ENCODE measurements at regions of chr22 and their contacts with region 1.

Region 1: DNA sequence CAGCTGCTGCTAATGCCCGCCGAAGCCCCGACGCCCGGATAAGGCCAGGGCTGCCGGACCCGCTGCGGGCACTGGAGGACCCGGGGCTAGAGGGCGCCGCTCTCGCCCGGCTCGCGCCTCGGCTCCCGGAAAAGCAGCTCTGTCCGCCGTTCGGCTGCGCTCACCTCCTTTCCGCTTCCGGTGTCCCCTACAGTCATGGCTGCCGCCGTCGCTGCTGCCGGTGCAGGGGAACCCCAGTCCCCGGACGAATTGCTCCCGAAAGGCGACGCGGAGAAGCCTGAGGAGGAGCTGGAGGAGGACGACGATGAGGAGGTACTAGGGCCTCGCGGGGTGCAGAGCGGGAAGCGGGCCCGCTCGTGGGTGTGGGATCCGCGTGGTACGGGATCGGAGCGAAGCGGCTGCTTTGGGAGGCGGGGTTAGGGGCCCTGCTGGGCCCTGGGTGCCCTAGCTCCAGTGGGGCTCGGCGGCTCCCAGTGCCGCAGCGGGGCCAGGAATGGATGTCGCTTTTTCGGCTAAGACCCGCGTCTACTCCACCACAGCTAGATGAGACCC is at the start of gene TOMM22:
- DNase-seq: peak; percentile 85 to 87
- ATAC-seq: peak; percentile 99
- H3K4me3 ChIP-seq: peak within 1 kb of the TSS; percentile 87
- H3K27ac ChIP-seq: peak within 1 kb of the TSS; percentile 88 to 92
- H3K4me1 ChIP-seq: no peaks in the 10 kb centered on the region
- CTCF ChIP-seq: peak; percentile 63
- EP300 ChIP-seq: no peak
- POLR2A ChIP-seq: peak; percentile 60
- RAD21 ChIP-seq: peak in 1 of 2 experiments; percentile 36; a peak in 1 of 5 replicates
- polyA plus RNA-seq, gene TOMM22: 53.6 and 63.2 TPM in 2 replicates

Region 2: GRCh38 chr22:38649841-38650522 is 31.9 kb before region 1 on chr22:
- CTCF ChIA-PET with region 1: interaction called, 3 read pairs
- POLR2A ChIA-PET with region 1: interaction called, 10 read pairs
- DNase-seq: no peak
- ATAC-seq: no peak
- H3K4me3 ChIP-seq: no peak overlapping the region
- H3K27ac ChIP-seq: no peak overlapping the region
- H3K4me1 ChIP-seq: no peaks in the 10 kb centered on the region
- CTCF ChIP-seq: no peak
- EP300 ChIP-seq: no peak
- POLR2A ChIP-seq: no peak
- RAD21 ChIP-seq: no peak

Region 3: DNA sequence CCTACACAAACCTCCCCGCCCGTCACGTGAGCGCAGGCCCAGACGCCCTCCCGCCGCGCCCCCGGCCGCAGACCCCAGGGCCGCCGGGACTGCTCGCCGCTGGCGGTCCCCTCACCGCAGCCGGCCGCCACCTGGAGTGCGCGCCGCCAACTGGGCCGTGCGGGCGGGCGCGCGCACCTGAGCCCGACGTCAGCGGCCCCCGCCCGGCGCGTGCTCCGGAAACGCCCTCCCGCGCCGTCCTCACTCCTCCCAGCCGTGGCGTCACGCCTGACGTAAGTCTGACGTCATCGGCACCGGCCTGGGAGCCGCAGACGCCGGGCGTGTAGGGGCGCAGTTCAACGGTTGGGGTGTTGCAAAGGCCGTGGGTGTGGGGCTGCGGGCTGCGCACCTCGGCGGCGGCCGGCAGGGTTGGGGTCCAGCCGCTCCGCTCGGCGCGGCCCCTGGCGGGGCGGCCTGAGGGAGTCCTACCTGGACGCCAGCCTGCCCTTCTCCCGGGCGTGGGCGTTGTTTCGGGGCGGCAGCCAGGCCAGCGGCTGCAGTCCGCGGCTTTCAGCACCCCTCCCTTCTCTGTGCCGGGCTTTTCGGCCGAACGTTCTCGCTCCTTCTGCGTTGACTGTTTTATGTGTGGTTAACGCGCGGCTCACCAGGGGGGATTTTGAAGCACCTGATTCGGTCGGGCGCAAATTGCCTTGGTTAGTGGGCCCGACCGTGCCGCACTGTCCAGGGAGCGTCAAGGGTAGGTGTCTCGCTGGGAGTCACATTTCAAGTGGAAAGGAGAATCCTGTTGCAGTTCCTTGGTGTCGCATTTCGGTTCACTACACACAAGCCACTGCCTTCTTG is 19.1 kb after region 1 on chr22 and contains the start of gene JOSD1:
- CTCF ChIA-PET with region 1: interaction called, 47 read pairs
- POLR2A ChIA-PET with region 1: interaction called, 15 read pairs
- DNase-seq: peak; percentile 64 to 95
- ATAC-seq: peak; percentile 12 to 60
- H3K4me3 ChIP-seq: peak within 1 kb of the TSS; percentile 88
- H3K27ac ChIP-seq: peak within 1 kb of the TSS; percentile 96 to 99
- H3K4me1 ChIP-seq: peaks cover 45% of the 10 kb centered on the region
- CTCF ChIP-seq: no peak
- EP300 ChIP-seq: 0 out of 5 replicates have a peak, but pooled peaks of 1 of the 2 experiments have one; percentile 11
- POLR2A ChIP-seq: peak; percentile 72
- RAD21 ChIP-seq: no peak
- polyA plus RNA-seq, gene JOSD1: 37.5 and 40.9 TPM in 2 replicates

Measured in A549 (cell line).